ENCODE measurements at regions of chr1 and their contacts with region 1.

Region 1: GRCh38 chr1:154097873-154098272 is 57.0 kb downstream of the NUP210L start:
- DNase-seq: no peak
- ATAC-seq: no peak

Region 2: DNA sequence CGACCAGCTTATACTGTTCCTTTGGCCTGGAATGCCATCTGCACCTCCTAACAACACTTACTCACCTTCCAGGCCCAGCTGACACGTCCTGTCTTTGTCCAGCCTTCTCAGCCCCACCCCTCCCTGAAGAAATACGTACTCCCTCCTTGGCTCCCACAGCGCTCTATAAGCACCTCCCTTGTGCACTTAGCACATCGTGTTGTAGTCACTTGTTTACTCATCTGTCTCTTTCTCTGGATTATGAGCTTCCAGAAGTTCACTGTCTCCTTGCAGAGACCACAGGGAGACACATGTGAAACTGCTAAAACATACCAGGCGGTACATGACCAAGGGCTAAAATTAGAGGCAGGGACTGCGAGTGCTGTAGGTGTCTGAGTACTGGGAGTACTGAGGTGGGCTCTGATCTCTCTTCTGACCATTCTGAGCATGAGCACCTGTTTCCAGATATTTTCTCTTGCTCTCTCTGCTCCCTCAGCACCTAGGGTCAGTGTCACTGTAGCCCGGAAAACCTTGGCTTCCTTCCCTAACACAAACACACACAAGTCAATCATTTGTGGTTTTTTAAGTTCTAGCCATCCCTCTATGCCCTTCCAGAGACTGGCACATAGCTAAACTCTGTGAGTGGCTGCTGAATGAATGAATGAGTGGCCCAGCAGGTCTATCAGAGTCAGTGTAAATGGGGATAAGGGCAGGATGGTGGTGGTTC is 940.9 kb after region 1 on chr1:
- intact Hi-C with region 1: loop called (anchors 10 kb)
- DNase-seq: no peak
- ATAC-seq: peak; percentile 62